Calu3 (cell line): ENCODE measurements at regions of chr15 and their contacts with region 1.

Region 1: DNA sequence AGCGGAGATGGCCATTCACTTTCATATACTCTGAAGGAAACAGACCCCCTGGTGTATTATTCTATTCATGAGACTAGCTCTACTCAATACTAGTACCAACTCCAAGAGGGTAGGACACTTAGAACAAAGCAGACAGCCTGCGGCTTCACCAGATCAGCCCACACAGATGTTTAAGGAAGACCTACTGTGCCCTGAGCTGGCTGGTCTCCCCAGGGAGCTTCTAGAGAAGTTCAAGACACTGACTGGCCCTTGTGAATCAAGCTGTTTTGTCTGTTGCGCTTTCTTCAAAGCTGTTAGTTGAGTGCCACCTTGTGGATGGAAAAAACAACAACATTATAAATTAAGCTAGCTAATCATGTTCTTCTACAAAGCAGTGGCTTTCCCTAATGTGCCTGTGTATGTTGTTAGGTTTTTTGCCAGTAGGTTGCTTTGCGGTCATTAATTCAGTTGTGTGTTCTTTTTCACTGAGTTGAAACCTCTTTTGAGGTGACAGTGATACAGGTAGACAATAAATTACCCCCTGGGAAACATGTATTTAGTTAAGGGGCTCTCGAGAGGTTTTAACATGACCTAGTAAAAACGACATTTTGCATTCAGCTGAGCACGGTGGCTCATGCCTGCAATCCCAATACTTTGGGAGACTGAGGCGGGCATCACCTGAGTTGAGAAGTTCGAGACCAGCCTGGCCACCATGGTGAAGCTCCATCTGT is 64.2 kb upstream of the MYZAP start:
- DNase-seq: peak; percentile 51
- H3K4me3 Mint-ChIP-seq: no peak overlapping the region
- H3K27ac Mint-ChIP-seq: no peak overlapping the region
- H3K4me1 Mint-ChIP-seq: no peaks in the 10 kb centered on the region
- H3K27me3 Mint-ChIP-seq: no peaks in the 10 kb centered on the region
- CTCF ChIP-seq: peak; percentile 62

Region 2: DNA sequence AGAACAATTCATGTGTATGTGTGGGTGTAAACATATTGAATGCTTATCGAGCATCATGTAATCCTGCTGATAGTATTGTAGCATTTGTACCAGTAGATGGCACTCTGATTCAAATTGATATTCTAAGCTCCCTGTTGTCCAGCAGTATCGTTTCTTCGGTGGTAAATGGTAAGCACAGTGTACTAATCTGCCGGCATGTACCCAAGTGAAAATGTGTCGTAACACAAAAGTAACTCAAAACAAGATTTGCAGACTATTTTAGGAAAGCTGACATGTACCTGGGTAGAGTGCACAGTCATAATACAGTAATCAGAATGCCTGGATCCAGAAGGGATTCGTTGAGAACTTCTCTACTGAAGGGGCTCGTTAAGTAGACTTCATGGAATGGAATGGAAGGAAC is 1030.9 kb before region 1 on chr15:
- CTCF ChIA-PET with region 1: interaction called, 6 read pairs
- intact Hi-C with region 1: loop called (anchors 5 kb)
- DNase-seq: peak; percentile 20
- H3K4me3 Mint-ChIP-seq: peak overlapping the region; percentile 48
- H3K27ac Mint-ChIP-seq: peak overlapping the region; percentile 54
- H3K4me1 Mint-ChIP-seq: peaks cover 31% of the 10 kb centered on the region
- H3K27me3 Mint-ChIP-seq: no peaks in the 10 kb centered on the region
- CTCF ChIP-seq: peak; percentile 67

Region 3: GRCh38 chr15:57340682-57341259 is 186.8 kb before region 1 on chr15:
- CTCF ChIA-PET with region 1: interaction called, 239 read pairs
- intact Hi-C with region 1: loop called (anchors 1 kb)
- DNase-seq: peak; percentile 76
- H3K4me3 Mint-ChIP-seq: no peak overlapping the region
- H3K27ac Mint-ChIP-seq: no peak overlapping the region
- H3K4me1 Mint-ChIP-seq: peaks cover 25% of the 10 kb centered on the region
- H3K27me3 Mint-ChIP-seq: no peaks in the 10 kb centered on the region
- CTCF ChIP-seq: peak; percentile 86

Region 4: GRCh38 chr15:57485869-57486268 is 41.7 kb before region 1 on chr15:
- CTCF ChIA-PET with region 1: interaction called, 12 read pairs
- intact Hi-C with region 1: no loop called
- DNase-seq: peak; percentile 88
- H3K4me3 Mint-ChIP-seq: peak overlapping the region; percentile 29
- H3K27ac Mint-ChIP-seq: peak overlapping the region; percentile 87
- H3K4me1 Mint-ChIP-seq: peaks cover 26% of the 10 kb centered on the region
- H3K27me3 Mint-ChIP-seq: no peaks in the 10 kb centered on the region
- CTCF ChIP-seq: no peak

Region 5: GRCh38 chr15:57541805-57542504 is 14.4 kb after region 1 on chr15:
- CTCF ChIA-PET with region 1: interaction called, 13 read pairs
- intact Hi-C with region 1: no loop called
- DNase-seq: peak; percentile 82
- H3K4me3 Mint-ChIP-seq: no peak overlapping the region
- H3K27ac Mint-ChIP-seq: no peak overlapping the region
- H3K4me1 Mint-ChIP-seq: no peaks in the 10 kb centered on the region
- H3K27me3 Mint-ChIP-seq: peaks cover 37% of the 10 kb centered on the region
- CTCF ChIP-seq: peak; percentile 79